A549 (cell line): ENCODE measurements at regions of chr17 and their contacts with region 1.

Region 1: DNA sequence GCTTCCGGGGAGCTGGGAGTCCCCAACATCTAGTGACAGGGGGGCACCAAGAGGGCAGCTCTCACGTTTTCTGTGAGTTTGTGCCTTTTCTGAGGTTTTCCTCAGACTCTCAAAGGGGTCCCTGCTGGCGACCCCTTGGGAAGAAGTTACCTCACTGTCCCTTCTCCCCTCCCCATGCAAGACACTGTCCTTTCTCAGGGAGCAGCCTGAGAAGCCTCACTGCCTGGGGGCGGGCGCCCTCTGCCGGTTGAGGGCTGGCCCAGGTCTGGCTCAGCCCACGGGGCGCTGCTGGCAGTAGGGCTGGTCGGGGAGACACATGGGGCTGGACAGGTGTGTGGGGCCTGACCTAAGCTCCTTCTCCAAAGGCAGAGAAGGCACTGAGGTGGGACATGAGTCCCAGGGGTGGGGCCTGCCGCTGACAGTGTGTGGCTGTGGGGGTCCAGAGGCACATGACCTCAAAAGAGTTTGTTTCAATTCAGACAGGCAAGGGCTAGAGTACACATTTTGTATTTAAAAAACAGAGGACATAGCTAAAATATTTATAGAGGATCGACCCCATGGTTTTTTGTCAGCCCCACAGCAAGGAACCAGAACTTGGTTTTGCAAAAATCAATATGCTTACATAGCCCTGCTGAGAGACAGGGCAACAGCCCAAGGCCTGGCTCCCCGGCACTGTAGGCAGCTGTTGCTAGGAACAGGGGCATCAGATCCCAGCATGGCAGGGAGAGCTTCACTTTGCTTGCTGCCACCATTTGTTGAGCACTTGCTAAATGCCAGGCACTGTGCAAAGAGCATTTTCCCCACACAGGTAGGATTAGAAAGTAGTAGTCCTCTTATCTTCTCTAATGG is 18.5 kb upstream of the ALDH3A1 start:
- DNase-seq: peak; percentile 77 to 86
- ATAC-seq: peak; percentile 83 to 93
- H3K4me3 ChIP-seq: no peak overlapping the region
- H3K27ac ChIP-seq: peak overlapping the region; percentile 9 to 51; a peak in 3 of 6 replicates
- H3K4me1 ChIP-seq: peaks cover 10% of the 10 kb centered on the region
- CTCF ChIP-seq: peak; percentile 99
- EP300 ChIP-seq: no peak
- POLR2A ChIP-seq: no peak
- RAD21 ChIP-seq: peak; percentile 100

Region 2: DNA sequence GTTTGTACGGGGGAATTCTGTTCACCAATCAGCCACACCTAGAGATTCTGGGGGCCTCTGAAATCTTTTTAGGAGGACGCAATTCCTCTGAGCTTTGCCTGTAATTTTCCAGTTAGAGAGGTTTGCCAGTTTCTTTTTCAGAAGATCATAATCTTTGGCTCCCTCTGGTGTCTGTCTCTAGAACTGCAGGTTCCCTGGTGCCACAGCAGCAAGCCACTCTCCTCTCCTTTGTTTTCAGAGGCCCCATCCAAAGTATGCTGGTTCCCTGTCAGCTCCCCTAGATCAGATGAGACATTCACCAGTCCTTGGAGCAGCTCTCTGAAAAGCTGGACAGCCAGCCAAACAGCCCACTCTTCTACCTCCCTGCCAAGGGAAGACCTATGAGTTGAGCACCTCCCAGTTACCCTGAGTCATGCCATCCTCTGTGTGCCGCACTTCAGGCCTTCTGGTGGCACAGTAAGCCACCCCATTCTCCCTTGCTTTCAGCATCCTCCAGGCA is 319.5 kb before region 1 on chr17:
- CTCF ChIA-PET with region 1: interaction called, 18 read pairs
- POLR2A ChIA-PET with region 1: no interaction called
- DNase-seq: peak; percentile 75 to 80
- ATAC-seq: peak; percentile 74 to 82
- H3K4me3 ChIP-seq: no peak overlapping the region
- H3K27ac ChIP-seq: peak overlapping the region; percentile 56 to 82
- H3K4me1 ChIP-seq: peaks cover 29% of the 10 kb centered on the region
- CTCF ChIP-seq: peak; percentile 97
- EP300 ChIP-seq: no peak
- POLR2A ChIP-seq: no peak
- RAD21 ChIP-seq: peak; percentile 95 to 96

Region 3: GRCh38 chr17:19513897-19514488 is 252.7 kb before region 1 on chr17:
- CTCF ChIA-PET with region 1: interaction called, 275 read pairs
- POLR2A ChIA-PET with region 1: no interaction called
- DNase-seq: peak; percentile 72 to 82
- ATAC-seq: peak; percentile 91 to 92
- H3K4me3 ChIP-seq: no peak overlapping the region
- H3K27ac ChIP-seq: peak overlapping the region; percentile 19 to 33; a peak in 2 of 6 replicates
- H3K4me1 ChIP-seq: peaks cover 4% of the 10 kb centered on the region; the same call in 1 of the 3 replicates
- CTCF ChIP-seq: peak; percentile 99
- EP300 ChIP-seq: no peak
- POLR2A ChIP-seq: no peak
- RAD21 ChIP-seq: peak; percentile 99 to 100

Region 4: GRCh38 chr17:19590912-19591551 is 175.6 kb before region 1 on chr17:
- CTCF ChIA-PET with region 1: interaction called, 12 read pairs
- POLR2A ChIA-PET with region 1: no interaction called
- DNase-seq: no peak
- ATAC-seq: peak; percentile 31 to 50; a peak in 2 of 6 replicates
- H3K4me3 ChIP-seq: no peak overlapping the region
- H3K27ac ChIP-seq: no peak overlapping the region
- H3K4me1 ChIP-seq: no peaks in the 10 kb centered on the region
- CTCF ChIP-seq: no peak
- EP300 ChIP-seq: no peak
- POLR2A ChIP-seq: no peak
- RAD21 ChIP-seq: 0 out of 5 replicates have a peak, but pooled peaks of 1 of the 2 experiments have one; percentile 14

Region 5: GRCh38 chr17:19672009-19672750 is 94.5 kb before region 1 on chr17:
- CTCF ChIA-PET with region 1: interaction called, 11 read pairs
- POLR2A ChIA-PET with region 1: interaction called, 3 read pairs
- DNase-seq: no peak
- ATAC-seq: peak; percentile 41 to 67
- H3K4me3 ChIP-seq: no peak overlapping the region
- H3K27ac ChIP-seq: peak overlapping the region in 1 of 2 experiments; percentile 39; a peak in 3 of 6 replicates
- H3K4me1 ChIP-seq: peaks cover 20% of the 10 kb centered on the region
- CTCF ChIP-seq: peak; percentile 8; the same call in 1 of the 3 replicates
- EP300 ChIP-seq: no peak
- POLR2A ChIP-seq: no peak
- RAD21 ChIP-seq: peak in 1 of 2 experiments; percentile 34; a peak in 2 of 5 replicates

Region 6: DNA sequence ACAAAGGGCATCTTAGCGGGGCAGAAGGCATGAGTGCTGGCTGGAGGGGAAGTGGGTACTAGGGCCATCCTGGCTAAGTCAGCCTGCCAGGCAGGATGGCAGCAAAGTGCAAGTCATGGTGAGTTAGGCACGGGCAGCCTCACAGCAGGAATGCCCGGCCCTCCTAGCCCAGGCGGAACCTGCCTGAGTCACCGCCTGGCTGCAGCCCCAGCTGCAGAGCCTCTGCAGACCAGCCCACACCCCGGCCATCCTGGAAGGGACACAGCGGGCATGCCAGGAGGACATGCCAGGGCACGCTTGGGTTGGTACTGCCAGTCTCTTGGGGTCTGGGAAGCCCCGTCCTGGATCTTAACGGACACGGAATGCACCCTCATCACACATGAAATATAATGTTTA is 13.6 kb before region 1 on chr17:
- CTCF ChIA-PET with region 1: interaction called, 681 read pairs
- POLR2A ChIA-PET with region 1: interaction called, 22 read pairs
- DNase-seq: peak; percentile 98 to 99
- ATAC-seq: peak; percentile 83 to 90
- H3K4me3 ChIP-seq: no peak overlapping the region; the same call in 2 of the 3 replicates
- H3K27ac ChIP-seq: peak overlapping the region; percentile 98 to 100
- H3K4me1 ChIP-seq: peaks cover 65% of the 10 kb centered on the region
- CTCF ChIP-seq: no peak
- EP300 ChIP-seq: peak; percentile 87 to 96; a peak in 4 of 5 replicates
- POLR2A ChIP-seq: peak; percentile 54
- RAD21 ChIP-seq: peak in 1 of 2 experiments; percentile 41; a peak in 2 of 5 replicates

Region 7: DNA sequence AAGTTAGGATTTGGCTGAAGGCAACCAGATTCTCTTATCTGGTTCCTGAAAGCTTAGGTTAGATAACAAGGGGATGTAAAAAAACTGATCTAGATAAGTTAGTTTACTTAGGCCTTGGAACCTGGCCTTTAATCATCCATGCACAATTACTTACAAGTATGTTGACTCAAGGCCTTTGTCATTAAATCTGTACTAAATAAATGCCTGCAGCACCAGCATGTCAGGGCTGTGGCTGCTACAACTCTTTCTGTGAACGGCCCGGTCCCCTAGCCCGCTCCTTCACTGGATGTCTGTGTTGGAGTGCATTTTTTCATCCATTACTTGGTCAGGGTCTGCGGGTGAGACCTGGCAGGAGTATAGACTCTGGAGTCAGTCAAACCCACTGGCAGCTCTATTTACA is 29.8 kb after region 1 on chr17:
- CTCF ChIA-PET with region 1: interaction called, 20 read pairs
- POLR2A ChIA-PET with region 1: no interaction called
- DNase-seq: no peak
- ATAC-seq: no peak
- H3K4me3 ChIP-seq: no peak overlapping the region
- H3K27ac ChIP-seq: no peak overlapping the region
- H3K4me1 ChIP-seq: no peaks in the 10 kb centered on the region
- CTCF ChIP-seq: no peak
- EP300 ChIP-seq: no peak
- POLR2A ChIP-seq: no peak
- RAD21 ChIP-seq: no peak

Region 8: DNA sequence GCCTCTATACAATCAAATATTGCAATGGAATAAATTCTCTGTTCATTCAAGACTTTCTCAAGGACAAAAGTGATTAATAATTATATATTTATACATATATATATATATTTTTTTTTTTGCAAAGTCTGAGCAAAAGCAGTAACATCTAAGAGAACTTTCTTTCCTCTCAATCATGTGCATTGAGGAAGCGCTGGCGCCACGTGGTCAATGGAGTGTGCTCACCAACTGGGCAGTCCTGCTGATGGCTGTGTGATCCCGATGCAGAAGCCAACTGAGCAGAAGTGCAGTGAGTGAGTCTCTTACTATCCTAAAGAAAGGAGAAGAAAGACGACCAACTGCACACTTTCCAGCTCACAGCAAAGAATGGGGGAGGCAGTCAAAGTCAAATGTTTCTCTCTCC is 138.3 kb after region 1 on chr17:
- CTCF ChIA-PET with region 1: no interaction called
- POLR2A ChIA-PET with region 1: no interaction called
- DNase-seq: no peak
- ATAC-seq: no peak
- H3K4me3 ChIP-seq: no peak overlapping the region
- H3K27ac ChIP-seq: peak overlapping the region in 1 of 2 experiments; percentile 1; a peak in 1 of 6 replicates
- H3K4me1 ChIP-seq: peaks cover 38% of the 10 kb centered on the region
- CTCF ChIP-seq: no peak
- EP300 ChIP-seq: no peak
- POLR2A ChIP-seq: no peak
- RAD21 ChIP-seq: no peak

Region 9: GRCh38 chr17:20825539-20825938 is 1058.9 kb after region 1 on chr17:
- CTCF ChIA-PET with region 1: no interaction called
- POLR2A ChIA-PET with region 1: no interaction called
- DNase-seq: no peak
- ATAC-seq: no peak
- H3K4me3 ChIP-seq: no peak overlapping the region
- H3K27ac ChIP-seq: no peak overlapping the region
- H3K4me1 ChIP-seq: no peaks in the 10 kb centered on the region
- CTCF ChIP-seq: no peak
- EP300 ChIP-seq: no peak
- POLR2A ChIP-seq: no peak
- RAD21 ChIP-seq: no peak